ENCODE measurements at regions of chr16 and their contacts with region 1.

Region 1: GRCh38 chr16:75464130-75464918 is at the start of gene TMEM170A:
- DNase-seq: peak; percentile 99
- H3K4me3 Mint-ChIP-seq: peak within 1 kb of the TSS; percentile 85
- H3K27ac Mint-ChIP-seq: peak within 1 kb of the TSS; percentile 87
- H3K4me1 Mint-ChIP-seq: peaks cover 43% of the 10 kb centered on the region
- H3K27me3 Mint-ChIP-seq: no peaks in the 10 kb centered on the region
- total RNA-seq, gene TMEM170A: 24.3 to 25.6 TPM

Region 2: GRCh38 chr16:75198135-75198600 is 266.2 kb before region 1 on chr16:
- CTCF ChIA-PET with region 1: interaction called, 8 read pairs
- POLR2A ChIA-PET with region 1: interaction called, 4 read pairs
- intact Hi-C with region 1: loop called (anchors 1 kb)
- DNase-seq: no peak
- H3K4me3 Mint-ChIP-seq: no peak overlapping the region
- H3K27ac Mint-ChIP-seq: no peak overlapping the region
- H3K4me1 Mint-ChIP-seq: peaks cover 9% of the 10 kb centered on the region
- H3K27me3 Mint-ChIP-seq: peaks cover 13% of the 10 kb centered on the region

Region 3: DNA sequence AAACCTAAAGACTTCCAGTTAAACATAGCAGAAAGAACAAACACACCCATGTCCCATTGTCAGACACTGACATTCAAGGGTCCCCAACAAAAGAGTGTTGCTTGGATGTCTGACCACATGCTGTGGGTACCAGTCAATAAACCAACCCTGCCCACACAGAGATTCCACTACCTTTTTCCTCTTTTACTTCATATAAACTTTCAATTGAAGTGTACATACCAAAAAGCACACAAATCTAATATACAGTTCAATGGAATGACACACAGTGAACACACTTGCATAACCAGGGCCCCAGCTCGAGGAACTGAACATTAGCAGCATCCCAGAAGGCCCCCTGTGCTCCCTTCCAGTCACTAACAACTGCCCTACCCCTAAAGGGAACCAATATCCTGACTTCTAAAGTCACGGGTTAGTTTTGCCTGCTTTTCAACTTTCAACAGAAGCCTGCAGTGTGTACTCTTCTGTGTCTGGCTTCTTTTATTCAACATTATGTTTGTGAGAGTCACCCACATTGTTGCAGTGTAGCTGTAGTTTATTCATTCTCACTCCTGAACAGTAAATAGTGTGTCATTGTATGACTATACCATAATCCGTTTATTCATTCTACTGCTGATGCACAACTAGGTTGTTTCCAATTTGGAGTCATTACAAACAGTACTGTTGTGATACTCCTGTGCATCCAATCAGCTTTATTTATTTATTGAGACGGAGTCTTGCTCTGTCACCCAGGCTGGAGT is 49.0 kb before region 1 on chr16:
- CTCF ChIA-PET with region 1: interaction called, 3 read pairs
- POLR2A ChIA-PET with region 1: no interaction called
- intact Hi-C with region 1: loop called (anchors 5 kb)
- DNase-seq: no peak
- H3K4me3 Mint-ChIP-seq: no peak overlapping the region
- H3K27ac Mint-ChIP-seq: peak overlapping the region; percentile 58
- H3K4me1 Mint-ChIP-seq: peaks cover 17% of the 10 kb centered on the region
- H3K27me3 Mint-ChIP-seq: no peaks in the 10 kb centered on the region

Region 4: DNA sequence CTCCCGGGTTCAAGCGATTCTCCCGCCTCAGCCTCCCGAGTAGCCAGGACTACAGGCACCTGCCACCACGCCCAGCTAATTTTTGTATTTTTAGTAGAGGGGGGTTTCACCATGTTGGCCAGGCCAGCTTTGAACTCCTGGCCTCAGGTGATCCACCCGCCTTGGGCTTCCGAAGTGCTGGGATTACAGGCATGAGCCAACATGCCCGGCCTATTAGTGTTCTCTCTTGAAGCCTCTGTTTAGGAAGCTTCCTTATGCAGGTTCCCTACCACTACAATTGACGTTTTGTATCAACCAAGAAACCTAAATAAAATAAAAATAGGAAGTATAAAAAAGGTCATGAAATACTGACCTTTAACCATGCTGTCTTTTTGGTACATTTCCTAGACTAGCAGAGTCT is 55.6 kb after region 1 on chr16:
- CTCF ChIA-PET with region 1: interaction called, 21 read pairs
- POLR2A ChIA-PET with region 1: interaction called, 4 read pairs
- intact Hi-C with region 1: loop called (anchors 1 kb)
- DNase-seq: no peak
- H3K4me3 Mint-ChIP-seq: no peak overlapping the region
- H3K27ac Mint-ChIP-seq: no peak overlapping the region
- H3K4me1 Mint-ChIP-seq: peaks cover 10% of the 10 kb centered on the region
- H3K27me3 Mint-ChIP-seq: no peaks in the 10 kb centered on the region

Region 5: GRCh38 chr16:75566040-75566810 is 101.9 kb after region 1 on chr16 and contains the start of gene GABARAPL2:
- CTCF ChIA-PET with region 1: interaction called, 12 read pairs
- POLR2A ChIA-PET with region 1: interaction called, 3 read pairs
- intact Hi-C with region 1: loop called (anchors 1 kb)
- DNase-seq: peak; percentile 92
- H3K4me3 Mint-ChIP-seq: peak within 1 kb of the TSS; percentile 94
- H3K27ac Mint-ChIP-seq: peak within 1 kb of the TSS; percentile 85
- H3K4me1 Mint-ChIP-seq: peaks cover 40% of the 10 kb centered on the region
- H3K27me3 Mint-ChIP-seq: peaks cover 7% of the 10 kb centered on the region
- total RNA-seq, gene GABARAPL2: 71.5 to 76.1 TPM

Region 6: DNA sequence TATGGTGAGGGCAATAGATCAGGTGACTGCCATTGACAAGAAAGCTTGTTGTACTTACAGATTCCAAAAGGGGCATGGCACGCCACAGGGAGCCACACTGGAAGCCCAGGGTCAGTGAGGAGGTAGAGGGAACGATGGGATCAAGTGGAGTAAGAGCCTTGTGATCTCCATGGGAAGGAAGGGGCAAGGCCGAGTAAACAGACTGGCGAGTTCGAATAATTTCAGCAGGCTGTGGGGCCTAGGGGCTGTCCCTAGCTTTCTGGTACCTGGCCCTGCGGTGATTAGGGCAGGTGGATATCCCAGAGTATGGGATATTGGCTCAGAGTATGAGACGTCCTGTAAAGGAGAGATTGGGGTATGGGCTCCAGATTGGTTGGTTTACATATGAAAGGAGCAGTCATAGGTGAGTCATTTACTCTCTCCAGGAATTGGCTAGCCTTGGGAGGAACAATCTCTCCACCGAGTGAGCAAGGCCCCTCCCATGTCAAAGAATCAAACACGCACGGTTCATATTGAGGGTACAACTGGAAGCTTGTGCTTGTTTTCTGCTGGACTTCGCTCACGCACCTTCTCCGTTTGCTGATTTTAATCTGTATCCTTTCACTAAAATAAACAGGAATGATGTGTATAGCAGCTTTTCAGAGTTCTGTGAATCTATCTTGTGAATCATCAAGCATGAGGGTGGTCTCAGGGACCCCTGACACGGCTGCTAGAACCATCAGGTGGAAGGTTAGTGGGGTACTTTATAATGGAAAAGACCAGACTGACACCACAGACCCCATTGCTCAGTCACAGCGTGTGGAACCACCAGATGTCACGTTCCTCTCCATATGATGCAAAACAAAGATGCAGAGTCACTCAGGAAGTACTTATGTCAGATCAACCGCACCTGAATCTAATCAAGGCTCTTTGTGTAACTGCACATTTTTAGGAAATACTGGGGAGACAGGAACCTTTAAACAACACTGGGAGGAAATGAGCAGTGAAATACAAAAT is 129.8 kb after region 1 on chr16:
- CTCF ChIA-PET with region 1: no interaction called
- POLR2A ChIA-PET with region 1: no interaction called
- intact Hi-C with region 1: no loop called
- DNase-seq: peak; percentile 36
- H3K4me3 Mint-ChIP-seq: no peak overlapping the region
- H3K27ac Mint-ChIP-seq: peak overlapping the region; percentile 65
- H3K4me1 Mint-ChIP-seq: peaks cover 14% of the 10 kb centered on the region
- H3K27me3 Mint-ChIP-seq: no peaks in the 10 kb centered on the region

Region 7: DNA sequence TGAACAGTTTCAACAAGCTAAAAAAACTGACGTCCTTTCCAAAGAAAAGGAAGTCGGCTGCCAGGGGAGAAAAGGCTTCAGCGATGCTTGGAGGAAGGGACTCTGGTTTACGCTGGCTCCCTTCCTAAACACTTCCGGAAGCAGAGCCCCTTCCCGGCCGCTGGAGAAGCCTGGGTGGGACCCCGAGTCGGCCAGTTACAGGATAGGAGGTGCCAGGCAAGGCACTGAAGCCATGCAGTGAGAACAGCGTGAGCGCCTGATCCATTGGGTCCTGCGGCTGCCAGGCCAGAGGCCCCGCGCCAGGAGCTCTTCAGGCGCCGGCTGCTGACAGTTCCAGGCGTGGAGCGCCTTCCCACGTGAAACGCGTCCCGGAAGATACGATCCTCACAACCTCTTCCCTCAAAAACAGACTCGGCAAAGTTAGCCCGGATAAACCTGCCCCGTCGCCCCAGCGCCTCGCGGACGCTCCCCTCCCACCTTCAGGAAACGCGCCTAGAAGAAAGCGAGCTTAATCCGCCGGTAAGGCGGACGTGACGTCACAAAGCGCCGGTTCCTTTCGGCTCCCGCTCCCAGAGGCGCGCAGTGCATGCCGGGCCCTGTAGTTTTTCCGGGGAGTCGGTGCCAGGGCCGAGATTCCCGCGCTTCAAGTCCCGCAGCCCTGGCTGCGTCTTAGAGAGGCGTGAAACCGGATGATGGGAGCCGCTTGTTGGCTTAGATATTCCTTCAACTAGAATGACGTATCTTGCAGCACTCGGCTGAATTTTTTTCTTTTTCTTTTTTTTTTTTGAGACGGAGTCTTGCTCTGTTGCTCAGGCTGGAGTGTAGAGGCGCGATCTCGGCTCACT is 158.7 kb after region 1 on chr16 and contains the start of gene ADAT1:
- CTCF ChIA-PET with region 1: interaction called, 5 read pairs
- POLR2A ChIA-PET with region 1: interaction called, 6 read pairs
- intact Hi-C with region 1: loop called (anchors 1 kb)
- DNase-seq: peak; percentile 99
- H3K4me3 Mint-ChIP-seq: peak within 1 kb of the TSS; percentile 96
- H3K27ac Mint-ChIP-seq: peak within 1 kb of the TSS; percentile 97
- H3K4me1 Mint-ChIP-seq: peaks cover 52% of the 10 kb centered on the region
- H3K27me3 Mint-ChIP-seq: no peaks in the 10 kb centered on the region
- total RNA-seq, gene ADAT1: 39.9 to 40.2 TPM

Region 8: DNA sequence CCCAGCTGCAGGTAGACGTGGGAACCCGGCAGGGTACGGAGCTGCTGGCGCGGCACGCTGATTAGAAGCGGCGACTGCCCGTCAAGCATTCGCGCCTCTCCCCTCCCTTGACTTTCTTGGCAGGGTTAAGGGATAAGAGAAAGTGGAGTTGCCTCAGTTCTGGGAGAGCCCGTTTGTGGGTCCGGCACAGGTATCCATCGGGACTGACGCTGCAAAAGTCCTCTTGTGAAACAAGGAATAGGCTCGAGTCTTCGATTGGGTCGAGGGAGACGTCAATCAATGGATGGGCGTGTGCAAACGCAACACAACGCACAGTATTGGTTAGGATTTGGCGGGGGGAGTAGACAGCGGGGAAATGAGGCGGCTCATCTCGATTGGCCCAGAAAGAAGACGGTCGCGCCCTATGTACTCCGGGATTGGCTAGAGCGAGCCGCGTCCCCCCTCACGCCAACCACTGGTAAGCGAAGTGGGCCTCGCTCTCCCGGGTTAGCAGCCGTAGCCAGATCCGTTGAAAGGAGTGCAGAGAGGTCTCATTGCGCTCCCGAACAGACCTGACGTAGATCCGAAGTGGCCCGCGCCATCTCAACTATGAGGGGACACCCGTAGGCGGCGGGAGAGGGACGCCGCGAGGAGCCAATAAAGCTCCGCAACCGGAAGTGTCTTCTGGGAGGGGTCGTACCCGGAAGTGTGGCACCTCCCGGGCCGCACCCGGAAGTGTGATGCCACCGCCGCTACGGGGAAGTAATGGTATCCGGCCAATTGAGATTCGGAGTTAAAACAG is 1726.3 kb after region 1 on chr16 and contains the start of gene MON1B:
- CTCF ChIA-PET with region 1: no interaction called
- POLR2A ChIA-PET with region 1: no interaction called
- intact Hi-C with region 1: loop called (anchors 1 kb)
- DNase-seq: peak; percentile 96
- H3K4me3 Mint-ChIP-seq: peak within 1 kb of the TSS; percentile 86
- H3K27ac Mint-ChIP-seq: peak within 1 kb of the TSS; percentile 98
- H3K4me1 Mint-ChIP-seq: peaks cover 33% of the 10 kb centered on the region
- H3K27me3 Mint-ChIP-seq: no peaks in the 10 kb centered on the region
- total RNA-seq, gene MON1B: 63.7 to 70.2 TPM